Cardiac septum (tissue), 1 donor: ENCODE measurements at regions of chr6 and their contacts with region 1.

Region 1: GRCh38 chr6:166382933-166383801 is at the start of gene MPC1:
- DNase-seq: peak; percentile 98
- total RNA-seq, gene MPC1: 396 TPM

Region 2: DNA sequence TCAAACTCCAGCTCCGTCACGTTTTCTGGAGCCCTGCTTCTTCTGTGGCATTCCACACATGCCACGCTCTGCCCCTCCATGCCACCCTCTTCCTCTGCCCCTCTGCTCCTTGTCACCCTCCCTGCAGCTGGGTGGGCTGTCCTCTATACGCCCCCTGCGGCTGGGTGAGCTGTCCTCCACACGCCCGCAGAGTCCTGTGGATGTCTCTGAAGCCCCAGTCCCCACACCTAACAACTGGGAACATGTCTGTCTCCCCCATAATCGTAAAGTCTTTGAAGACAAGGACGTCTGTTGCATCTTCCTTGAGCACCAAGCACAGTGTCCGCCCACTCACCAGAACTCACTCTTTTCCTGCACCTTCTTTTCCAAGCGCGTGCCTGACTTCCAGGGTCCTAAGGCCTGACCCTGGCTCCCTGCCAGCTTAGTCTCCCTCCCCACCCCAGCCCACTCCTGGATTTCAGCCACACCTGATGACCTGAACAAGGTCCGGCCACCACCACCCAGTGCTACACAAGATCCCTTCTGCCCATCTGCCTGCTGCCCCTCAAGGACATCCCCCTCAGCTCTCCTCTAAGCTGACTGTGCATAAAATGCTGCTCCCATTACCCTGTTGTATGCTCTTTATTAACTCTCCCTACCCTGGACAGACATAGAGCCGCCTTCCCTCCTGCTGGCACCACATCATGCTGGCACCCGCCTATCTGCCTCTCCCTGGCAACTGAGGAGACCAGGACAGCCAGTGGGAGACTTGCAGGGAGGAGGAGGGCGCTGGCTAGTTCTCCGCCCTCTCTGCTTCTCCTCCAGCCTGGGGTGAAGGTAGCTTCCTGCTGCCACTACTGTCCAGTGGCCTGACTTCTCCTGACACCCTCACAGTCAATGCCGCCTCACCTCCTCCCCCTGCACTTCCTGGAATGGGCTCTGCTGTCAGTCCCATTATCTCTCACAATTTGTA is 64.2 kb before region 1 on chr6:
- intact Hi-C with region 1: loop called (anchors 5 kb)
- DNase-seq: no peak

Region 3: GRCh38 chr6:166342349-166343149 is 40.6 kb before region 1 on chr6 and contains the start of gene SFT2D1:
- intact Hi-C with region 1: loop called (anchors 2 kb)
- DNase-seq: peak; percentile 95
- total RNA-seq, gene SFT2D1: 25.1 TPM

Region 4: DNA sequence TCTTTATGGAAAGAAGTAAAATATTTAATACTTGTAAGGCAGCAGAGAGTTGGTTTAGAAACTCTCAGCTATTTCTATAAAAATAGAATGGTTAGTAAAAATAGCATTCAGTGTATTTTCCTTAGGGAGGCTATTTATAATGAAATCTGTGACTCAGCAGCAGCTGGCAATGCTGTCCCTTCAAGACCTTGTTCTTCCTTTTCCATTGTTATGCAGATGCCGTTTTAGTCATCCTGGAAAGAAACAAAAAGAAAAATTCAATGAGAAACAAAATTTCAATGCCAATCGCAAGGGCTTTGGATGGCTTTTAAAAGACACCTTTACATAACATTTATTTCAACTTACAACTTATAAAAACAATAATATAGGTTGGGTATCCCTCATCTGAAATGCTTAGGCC is 17.9 kb before region 1 on chr6:
- intact Hi-C with region 1: loop called (anchors 2 kb)
- DNase-seq: no peak